Cardiac septum (tissue), 1 donor: ENCODE measurements at regions of chr7 and their contacts with region 1.

Region 1: DNA sequence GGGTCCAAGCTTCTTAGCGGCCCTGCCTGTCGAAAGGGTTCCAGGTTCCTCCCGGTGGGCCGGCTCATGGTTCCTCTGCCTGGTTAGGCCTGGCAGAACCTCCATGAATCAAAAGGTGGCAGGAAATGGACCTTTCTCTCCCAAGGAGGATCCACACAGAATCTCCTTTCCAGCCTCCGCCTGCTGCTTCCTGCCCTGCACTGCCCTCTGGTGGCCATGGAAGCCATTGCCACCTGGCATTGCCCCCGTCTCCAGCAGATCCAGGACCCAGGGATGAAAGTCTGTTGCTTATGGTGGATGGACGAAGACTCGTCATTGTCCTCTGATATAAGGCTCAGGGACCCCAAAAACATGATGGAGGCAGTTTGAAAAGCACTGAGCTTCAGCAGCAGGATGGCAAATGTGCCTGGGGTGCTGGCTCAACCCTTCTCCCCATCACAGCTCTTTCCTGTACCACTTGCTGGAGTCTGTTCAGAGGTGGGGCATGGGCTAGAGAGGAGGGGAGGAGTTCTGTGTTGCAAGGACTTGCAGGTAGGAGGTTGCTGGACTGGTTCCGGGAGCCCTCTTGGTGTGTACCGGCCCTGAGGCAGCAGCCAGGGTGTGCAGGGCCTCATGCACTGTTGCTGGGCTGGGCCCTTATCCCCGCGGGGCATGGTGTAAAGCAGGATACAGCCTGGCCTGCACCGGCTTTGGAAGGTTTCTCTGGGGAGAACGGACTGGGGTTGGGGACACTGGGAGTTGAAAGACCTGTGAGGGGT is 11.3 kb upstream of the INMT start:
- DNase-seq: no peak

Region 2: DNA sequence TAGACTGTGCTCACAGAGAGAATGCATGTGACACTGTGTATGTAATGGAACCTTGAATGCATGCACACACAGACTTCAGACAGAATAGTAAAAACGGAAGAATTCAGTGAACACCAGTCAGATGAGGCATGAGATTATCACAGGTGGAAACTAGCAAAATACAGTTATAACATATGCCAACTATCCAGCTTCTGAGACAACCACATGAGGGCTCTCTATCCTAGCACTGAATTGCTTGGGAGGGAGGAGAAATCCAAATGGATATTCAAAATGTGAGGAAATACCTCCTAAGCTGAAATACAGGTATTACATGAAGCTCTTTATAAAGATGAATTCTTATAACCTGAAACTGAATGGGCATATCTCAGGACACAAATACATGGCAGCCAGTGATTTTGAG is 115.3 kb before region 1 on chr7:
- intact Hi-C with region 1: loop called (anchors 5 kb)
- DNase-seq: no peak

Region 3: GRCh38 chr7:30681815-30682211 is 58.8 kb before region 1 on chr7:
- intact Hi-C with region 1: loop called (anchors 2 kb)
- DNase-seq: no peak

Region 4: GRCh38 chr7:30974605-30975255 is 234.1 kb after region 1 on chr7:
- intact Hi-C with region 1: loop called (anchors 5 kb)
- DNase-seq: peak; percentile 74